Cardiac septum (tissue), 1 donor: ENCODE measurements at regions of chr9 and their contacts with region 1.

Region 1: DNA sequence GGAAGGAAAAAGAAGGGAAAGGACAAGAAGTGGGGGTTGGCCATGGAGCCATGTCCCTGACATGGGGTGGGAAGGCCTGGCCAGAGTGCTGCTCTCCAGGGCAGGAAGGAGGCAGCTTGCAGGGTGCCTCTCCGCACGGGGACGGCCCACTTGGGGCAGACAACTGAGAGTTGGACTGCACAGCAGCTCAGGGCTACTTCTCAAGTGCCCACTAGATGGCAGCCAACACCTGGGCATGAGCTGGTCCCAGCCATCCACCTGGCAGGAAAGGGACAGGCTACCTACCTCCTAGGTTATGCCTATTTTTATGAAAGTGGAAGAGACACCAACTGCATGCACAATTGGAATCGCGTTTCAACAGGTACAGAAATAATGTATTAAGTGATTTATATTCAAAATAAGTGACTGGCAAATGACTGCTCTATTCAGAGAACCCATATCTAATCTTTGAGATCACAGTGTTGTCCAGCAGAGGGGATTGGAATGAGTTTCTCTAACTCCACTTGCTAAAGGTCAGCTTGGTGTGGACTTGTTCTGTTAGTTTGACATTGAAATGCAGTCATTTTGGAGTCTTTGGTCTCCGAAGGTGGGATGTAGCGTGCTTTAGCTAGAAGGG is 113.4 kb downstream of the SYK start:
- DNase-seq: peak; percentile 89

Region 2: DNA sequence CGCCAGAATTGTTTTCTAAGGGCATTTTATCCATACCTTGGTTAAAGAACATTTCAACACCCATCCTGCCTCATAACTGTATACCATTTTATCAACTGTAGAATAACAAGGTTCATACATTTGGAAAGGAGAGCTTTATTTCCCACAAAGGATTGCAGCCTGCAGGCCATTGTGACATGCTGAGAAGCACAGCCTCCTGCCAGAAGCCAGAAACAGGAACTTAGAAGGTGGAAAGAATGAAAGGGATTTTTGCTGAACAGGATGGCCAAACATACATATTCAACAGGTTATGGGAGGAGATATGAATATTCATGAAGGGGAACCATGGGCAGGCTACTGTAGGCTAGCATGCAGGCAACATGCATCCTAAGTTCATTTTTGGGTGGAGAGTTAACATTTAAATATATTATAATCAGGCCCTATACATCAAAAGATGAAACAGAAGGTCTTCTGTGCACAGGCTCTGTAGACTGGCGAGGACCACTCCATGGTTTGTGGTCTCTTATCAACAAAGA is 212.5 kb before region 1 on chr9:
- intact Hi-C with region 1: no loop called
- DNase-seq: no peak

Region 3: GRCh38 chr9:90979138-90979551 is 64.2 kb after region 1 on chr9:
- intact Hi-C with region 1: no loop called
- DNase-seq: no peak

Region 4: DNA sequence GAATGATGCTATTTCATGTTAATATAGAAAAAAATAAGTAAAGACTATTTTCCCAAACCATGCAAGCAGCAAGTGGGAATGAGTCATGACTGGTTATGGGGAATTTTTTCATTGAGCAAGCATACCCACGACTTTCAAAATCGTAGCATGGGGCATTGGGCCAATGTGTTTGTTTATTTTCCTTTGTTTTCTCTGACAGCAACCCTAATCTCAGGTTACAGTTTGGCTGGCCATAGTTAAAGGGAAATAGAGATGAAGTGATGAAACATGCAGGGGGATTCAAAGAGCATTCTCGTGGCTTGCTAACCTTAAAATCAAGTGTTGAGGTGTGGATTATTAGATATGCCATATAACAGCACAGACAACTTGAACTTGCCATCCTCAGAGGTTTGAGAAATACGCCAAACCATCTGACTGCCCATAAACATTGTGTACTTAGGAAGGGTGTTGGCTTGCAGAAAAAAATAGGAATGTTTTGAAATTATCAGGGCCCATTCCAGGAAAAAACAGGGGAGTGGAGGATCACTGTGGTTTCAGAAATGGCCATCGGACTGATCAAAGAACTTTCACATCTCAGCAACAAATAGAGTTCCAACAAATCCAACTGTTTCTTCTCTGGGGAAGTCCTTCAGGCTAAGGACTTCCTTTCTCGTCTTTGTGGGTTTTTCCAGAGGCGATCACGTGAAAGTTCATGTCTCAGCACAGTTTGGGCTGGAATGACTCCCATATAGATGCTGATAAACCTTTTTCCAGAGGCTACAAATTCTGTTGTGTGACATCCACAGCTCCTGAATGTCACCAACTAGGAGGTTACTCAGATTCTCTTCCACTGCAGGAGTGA is 145.7 kb after region 1 on chr9:
- intact Hi-C with region 1: no loop called
- DNase-seq: no peak

Region 5: DNA sequence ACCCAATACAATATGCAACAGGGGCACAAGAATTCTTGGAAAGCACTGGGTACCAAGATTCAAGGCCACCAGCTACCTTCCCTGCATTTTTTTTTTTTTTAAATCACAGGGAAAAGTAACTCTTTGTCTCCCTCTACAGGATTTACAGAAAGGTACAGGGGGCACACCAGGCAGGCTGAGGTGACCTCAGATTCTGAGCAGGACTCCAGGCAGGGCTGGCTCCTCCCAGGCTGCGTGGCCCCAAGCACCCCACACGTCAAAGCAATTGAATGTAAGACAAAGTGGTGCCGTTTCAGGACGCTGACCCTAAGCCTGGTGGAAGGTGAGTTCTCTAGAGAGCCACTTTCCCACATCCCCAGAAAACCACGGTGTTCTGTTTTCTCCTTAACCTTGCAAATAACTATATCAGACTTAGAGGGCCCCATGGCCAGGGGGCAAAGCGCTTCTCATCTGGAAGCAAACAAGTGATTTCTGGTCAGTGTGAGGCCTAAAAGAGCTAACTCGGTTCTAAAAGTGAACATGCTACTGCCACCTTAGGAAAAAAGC is 812.4 kb after region 1 on chr9:
- intact Hi-C with region 1: loop called (anchors 5 kb)
- DNase-seq: no peak